Esophagus muscularis mucosa (tissue), 4 donors: ENCODE measurements at regions of chr4 and their contacts with region 1.

Region 1: GRCh38 chr4:10063544-10064300 is 42.4 kb upstream of the SLC2A9 start:
- DNase-seq: no peak
- H3K4me3 ChIP-seq: no peak overlapping the region
- H3K27ac ChIP-seq: peak overlapping the region; percentile 41 to 59 (median 52)
- H3K4me1 ChIP-seq: peaks cover 10 to 16% (median 14%) of the 10 kb centered on the region in 4 donors
- H3K27me3 ChIP-seq: no peaks in the 10 kb centered on the region
- CTCF ChIP-seq: peak; percentile 58 to 64 (median 61)
- EP300 ChIP-seq: no peak
- POLR2A ChIP-seq: no peak

Region 2: DNA sequence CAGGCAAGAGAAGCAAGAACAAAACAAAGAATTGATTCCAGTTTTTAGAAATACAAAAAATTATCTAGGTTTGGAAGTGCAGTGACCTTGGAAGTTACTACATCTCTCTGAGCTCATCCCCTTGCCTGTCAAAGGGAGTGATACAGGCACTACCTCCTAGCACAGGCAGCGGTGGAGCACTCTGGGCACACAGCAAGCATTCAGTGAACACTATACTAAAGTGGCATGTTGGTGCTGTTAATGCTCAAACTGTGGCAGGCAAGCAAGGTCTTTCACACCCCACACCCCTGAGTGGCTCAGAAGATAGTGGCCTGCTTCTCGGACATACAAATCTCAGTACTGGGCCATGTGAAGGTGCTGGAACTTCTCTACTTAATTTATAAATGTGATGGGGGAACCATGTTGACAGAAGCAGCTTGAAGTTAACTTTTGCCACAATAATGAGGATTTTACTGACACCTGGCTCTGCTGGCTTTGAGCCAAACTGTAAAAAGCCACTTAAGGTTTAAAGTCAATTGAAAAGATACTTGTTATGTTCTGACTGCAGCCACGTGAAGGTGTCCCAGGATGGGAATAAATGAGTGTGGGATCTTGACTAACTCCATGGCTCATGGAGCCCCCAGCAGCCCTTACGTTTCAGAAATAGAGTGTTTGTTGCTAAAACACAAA is 230.9 kb before region 1 on chr4:
- intact Hi-C with region 1: no loop called
- DNase-seq: no peak
- H3K4me3 ChIP-seq: no peak overlapping the region
- H3K27ac ChIP-seq: no peak overlapping the region
- H3K4me1 ChIP-seq: no peaks in the 10 kb centered on the region
- H3K27me3 ChIP-seq: no peaks in the 10 kb centered on the region
- CTCF ChIP-seq: no peak
- EP300 ChIP-seq: no peak
- POLR2A ChIP-seq: no peak

Region 3: GRCh38 chr4:9889306-9889705 is 174.4 kb before region 1 on chr4:
- intact Hi-C with region 1: no loop called
- DNase-seq: no peak
- H3K4me3 ChIP-seq: no peak overlapping the region
- H3K27ac ChIP-seq: no peak overlapping the region
- H3K4me1 ChIP-seq: no peaks in the 10 kb centered on the region
- H3K27me3 ChIP-seq: no peaks in the 10 kb centered on the region
- CTCF ChIP-seq: no peak
- EP300 ChIP-seq: no peak
- POLR2A ChIP-seq: no peak

Region 4: GRCh38 chr4:10157478-10158332 is 94.0 kb after region 1 on chr4:
- intact Hi-C with region 1: no loop called
- DNase-seq: no peak
- H3K4me3 ChIP-seq: peak overlapping the region in 1 of 4 donors; percentile 14
- H3K27ac ChIP-seq: peak overlapping the region; percentile 73 to 76 (median 74)
- H3K4me1 ChIP-seq: peaks cover 0 to 33% (median 20%) of the 10 kb centered on the region in 4 donors
- H3K27me3 ChIP-seq: no peaks in the 10 kb centered on the region
- CTCF ChIP-seq: peak; percentile 82 to 85 (median 84)
- EP300 ChIP-seq: no peak
- POLR2A ChIP-seq: no peak

Region 5: GRCh38 chr4:10403633-10404445 is 340.1 kb after region 1 on chr4:
- intact Hi-C with region 1: loop called (anchors 10 kb)
- DNase-seq: no peak
- H3K4me3 ChIP-seq: no peak overlapping the region
- H3K27ac ChIP-seq: no peak overlapping the region
- H3K4me1 ChIP-seq: peaks cover 0 to 4% (median 2%) of the 10 kb centered on the region in 4 donors
- H3K27me3 ChIP-seq: no peaks in the 10 kb centered on the region
- CTCF ChIP-seq: peak; percentile 59 to 73 (median 61)
- EP300 ChIP-seq: no peak
- POLR2A ChIP-seq: no peak